ENCODE measurements at regions of chr11 and their contacts with region 1.

Region 1: GRCh38 chr11:83071567-83072349 is at the start of gene RAB30:
- DNase-seq: peak; percentile 100
- H3K4me3 Mint-ChIP-seq: no peak within 1 kb of the TSS
- H3K27ac Mint-ChIP-seq: no peak within 1 kb of the TSS
- H3K4me1 Mint-ChIP-seq: peaks cover 26% of the 10 kb centered on the region
- H3K27me3 Mint-ChIP-seq: no peaks in the 10 kb centered on the region
- CTCF ChIP-seq: no peak
- total RNA-seq, gene RAB30: 12.5 and 13.2 TPM in 2 replicates

Region 2: DNA sequence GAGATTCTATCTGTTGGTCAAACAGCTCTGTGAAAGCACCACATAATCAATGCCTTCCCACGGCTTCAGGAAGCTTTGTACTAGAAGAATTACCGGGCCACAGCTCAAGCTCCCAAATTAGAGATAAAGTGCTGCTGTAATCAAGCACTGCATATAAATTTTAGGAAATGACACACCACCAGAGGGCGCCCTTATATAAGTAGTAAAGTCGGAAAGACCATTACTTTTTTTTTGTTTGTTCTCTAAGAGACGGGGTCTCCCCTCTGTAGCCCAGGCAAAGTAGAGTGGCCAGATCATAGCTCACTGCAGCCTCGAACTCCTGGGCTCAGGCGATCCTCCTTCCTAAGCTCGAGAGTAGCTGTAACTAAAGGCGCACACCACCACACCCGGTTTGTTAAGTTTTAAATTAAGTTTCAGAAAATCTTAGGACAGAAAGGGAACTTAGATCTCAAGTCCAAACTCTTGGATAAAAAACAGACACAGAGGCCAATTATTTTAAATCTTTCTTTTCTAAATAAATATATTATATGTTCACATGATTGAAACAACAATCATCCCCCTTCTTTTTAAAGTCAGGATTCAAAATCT is 204.2 kb before region 1 on chr11:
- CTCF ChIA-PET with region 1: interaction called, 3 read pairs
- POLR2A ChIA-PET with region 1: interaction called, 7 read pairs
- intact Hi-C with region 1: loop called (anchors 5 kb)
- DNase-seq: peak; percentile 71
- H3K4me3 Mint-ChIP-seq: no peak overlapping the region
- H3K27ac Mint-ChIP-seq: no peak overlapping the region
- H3K4me1 Mint-ChIP-seq: peaks cover 23% of the 10 kb centered on the region
- H3K27me3 Mint-ChIP-seq: no peaks in the 10 kb centered on the region
- CTCF ChIP-seq: peak; percentile 75

Region 3: DNA sequence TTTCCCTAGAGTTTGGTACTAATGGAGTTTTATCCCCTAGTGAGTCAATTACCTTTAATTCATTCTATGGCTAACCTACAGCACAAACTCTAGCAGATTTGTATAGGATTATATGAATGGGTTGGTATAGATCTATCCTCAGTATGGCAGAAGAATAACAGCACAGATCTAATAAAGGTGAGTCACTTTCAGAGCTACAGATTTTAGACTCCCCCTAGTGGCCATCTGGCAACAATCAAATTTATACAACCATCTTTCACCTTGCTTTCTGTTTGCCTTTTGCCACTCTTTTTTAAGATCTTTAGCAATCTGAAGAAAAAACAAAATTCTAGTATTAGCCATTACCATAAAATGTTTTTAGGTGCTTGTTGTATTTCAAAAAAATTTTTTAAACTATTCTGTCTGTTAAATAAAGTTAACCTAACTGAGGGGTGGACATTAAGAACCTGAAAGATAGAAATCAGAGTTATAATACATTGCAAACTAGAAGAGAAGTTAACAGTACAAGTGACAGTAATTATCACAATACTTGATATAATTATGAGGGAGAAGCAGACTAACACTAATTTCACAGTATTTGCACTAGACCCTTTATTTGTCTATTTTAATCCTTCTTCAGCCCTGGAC is 144.4 kb before region 1 on chr11:
- CTCF ChIA-PET with region 1: interaction called, 5 read pairs
- POLR2A ChIA-PET with region 1: interaction called, 3 read pairs
- intact Hi-C with region 1: loop called (anchors 1 kb)
- DNase-seq: peak; percentile 73
- H3K4me3 Mint-ChIP-seq: no peak overlapping the region
- H3K27ac Mint-ChIP-seq: no peak overlapping the region
- H3K4me1 Mint-ChIP-seq: no peaks in the 10 kb centered on the region
- H3K27me3 Mint-ChIP-seq: no peaks in the 10 kb centered on the region
- CTCF ChIP-seq: peak; percentile 50

Region 4: GRCh38 chr11:83025267-83025720 is 46.5 kb before region 1 on chr11:
- CTCF ChIA-PET with region 1: interaction called, 6 read pairs
- POLR2A ChIA-PET with region 1: interaction called, 41 read pairs
- intact Hi-C with region 1: loop called (anchors 5 kb)
- DNase-seq: peak; percentile 71
- H3K4me3 Mint-ChIP-seq: no peak overlapping the region
- H3K27ac Mint-ChIP-seq: peak overlapping the region; percentile 19
- H3K4me1 Mint-ChIP-seq: peaks cover 16% of the 10 kb centered on the region
- H3K27me3 Mint-ChIP-seq: no peaks in the 10 kb centered on the region
- CTCF ChIP-seq: no peak

Region 5: GRCh38 chr11:83051760-83052671 is 19.7 kb before region 1 on chr11:
- CTCF ChIA-PET with region 1: interaction called, 7 read pairs
- POLR2A ChIA-PET with region 1: interaction called, 134 read pairs
- intact Hi-C with region 1: no loop called
- DNase-seq: peak; percentile 92
- H3K4me3 Mint-ChIP-seq: peak overlapping the region; percentile 43
- H3K27ac Mint-ChIP-seq: peak overlapping the region; percentile 84
- H3K4me1 Mint-ChIP-seq: peaks cover 50% of the 10 kb centered on the region
- H3K27me3 Mint-ChIP-seq: no peaks in the 10 kb centered on the region
- CTCF ChIP-seq: no peak

Region 6: GRCh38 chr11:83193315-83194280 is 121.8 kb after region 1 on chr11 and contains the start of gene ANKRD42:
- CTCF ChIA-PET with region 1: no interaction called
- POLR2A ChIA-PET with region 1: interaction called, 33 read pairs
- intact Hi-C with region 1: no loop called
- DNase-seq: peak; percentile 97
- H3K4me3 Mint-ChIP-seq: peak within 1 kb of the TSS; percentile 94
- H3K27ac Mint-ChIP-seq: peak within 1 kb of the TSS; percentile 92
- H3K4me1 Mint-ChIP-seq: peaks cover 34% of the 10 kb centered on the region
- H3K27me3 Mint-ChIP-seq: no peaks in the 10 kb centered on the region
- CTCF ChIP-seq: no peak
- total RNA-seq, gene ANKRD42: 8.6 and 13.5 TPM in 2 replicates

Measured in MCF 10A (cell line).